Activated naive CD4-positive, alpha-beta T cell treated with anti-CD3 and anti-CD28 coated beads, Interleukin-2, amount 10 ng/mL, durations not matched to agents 7 days and 5 days (primary cell): ENCODE measurements at regions of chr5 and their contacts with region 1.

Region 1: DNA sequence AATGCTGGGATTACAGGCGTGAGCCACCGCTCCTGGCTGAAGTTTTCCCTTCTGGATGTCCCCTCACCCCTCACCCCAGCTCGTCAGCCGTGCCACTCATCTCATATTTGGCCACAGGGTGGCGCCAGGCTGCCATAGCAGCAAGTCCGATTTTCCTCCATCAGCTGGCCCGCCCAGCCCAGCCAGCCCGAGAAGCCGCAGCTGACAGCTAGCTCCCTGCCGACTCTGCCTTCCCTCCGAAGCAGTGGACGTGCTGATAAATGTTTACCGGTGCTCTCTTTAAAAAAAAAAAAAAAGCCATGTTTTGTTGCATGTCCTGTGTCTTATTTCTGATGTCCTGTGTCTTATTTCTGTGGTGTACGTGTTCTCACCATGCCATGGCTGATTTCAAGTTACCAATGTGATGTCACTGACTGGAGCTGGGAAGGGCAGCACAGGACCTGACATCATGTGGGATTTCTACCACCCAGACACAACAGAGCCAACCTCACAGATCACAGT is 58.3 kb downstream of the PFDN1 start:
- DNase-seq: peak; percentile 93
- H3K4me3 Mint-ChIP-seq: peak overlapping the region; percentile 32
- H3K27ac Mint-ChIP-seq: peak overlapping the region; percentile 9
- H3K4me1 Mint-ChIP-seq: peaks cover 52% of the 10 kb centered on the region
- H3K27me3 Mint-ChIP-seq: peaks cover 4% of the 10 kb centered on the region

Region 2: DNA sequence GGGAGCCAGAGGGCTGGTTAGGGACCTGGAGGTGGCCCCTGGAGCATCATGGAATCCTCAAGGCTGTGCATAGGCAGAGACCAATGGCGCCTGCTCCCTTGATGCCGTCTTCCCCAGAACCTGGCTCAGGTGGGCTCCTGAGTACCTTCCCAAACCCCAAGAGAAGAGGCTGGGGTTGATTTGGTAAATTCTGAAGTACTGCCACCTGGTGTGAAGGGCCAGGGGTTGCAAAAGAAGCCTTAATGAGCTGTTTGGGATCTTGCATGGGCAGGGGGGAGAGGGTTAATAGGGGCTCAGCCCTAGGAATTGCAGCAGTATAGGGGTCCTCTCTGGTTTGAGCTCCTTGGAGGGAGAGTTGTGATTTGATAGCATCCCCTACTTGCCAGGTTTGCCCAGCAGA is 17.5 kb before region 1 on chr5:
- CTCF ChIA-PET with region 1: interaction called, 12 read pairs
- DNase-seq: no peak
- H3K4me3 Mint-ChIP-seq: no peak overlapping the region
- H3K27ac Mint-ChIP-seq: no peak overlapping the region
- H3K4me1 Mint-ChIP-seq: peaks cover 1% of the 10 kb centered on the region
- H3K27me3 Mint-ChIP-seq: peaks cover 17% of the 10 kb centered on the region

Region 3: DNA sequence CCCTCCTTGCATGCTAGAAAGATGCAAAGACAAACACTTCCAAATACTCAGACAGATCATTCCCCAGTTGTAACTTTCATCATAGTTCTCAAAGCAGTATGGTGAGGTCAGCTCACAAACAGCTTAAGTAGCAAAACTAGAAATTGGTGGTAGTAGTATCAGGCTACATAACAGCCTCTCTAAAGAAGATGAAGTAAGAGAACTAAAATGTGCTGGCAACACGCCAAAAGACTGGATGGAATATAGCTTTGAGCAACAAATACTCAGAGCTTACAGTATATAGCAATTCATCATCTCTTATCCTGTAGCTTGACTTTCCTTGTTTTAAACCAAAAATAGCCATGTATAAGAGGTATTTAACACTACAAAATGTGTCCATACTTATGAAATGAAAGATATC is 50.8 kb after region 1 on chr5:
- CTCF ChIA-PET with region 1: interaction called, 16 read pairs
- DNase-seq: no peak
- H3K4me3 Mint-ChIP-seq: no peak overlapping the region
- H3K27ac Mint-ChIP-seq: no peak overlapping the region
- H3K4me1 Mint-ChIP-seq: peaks cover 61% of the 10 kb centered on the region
- H3K27me3 Mint-ChIP-seq: no peaks in the 10 kb centered on the region

Region 4: DNA sequence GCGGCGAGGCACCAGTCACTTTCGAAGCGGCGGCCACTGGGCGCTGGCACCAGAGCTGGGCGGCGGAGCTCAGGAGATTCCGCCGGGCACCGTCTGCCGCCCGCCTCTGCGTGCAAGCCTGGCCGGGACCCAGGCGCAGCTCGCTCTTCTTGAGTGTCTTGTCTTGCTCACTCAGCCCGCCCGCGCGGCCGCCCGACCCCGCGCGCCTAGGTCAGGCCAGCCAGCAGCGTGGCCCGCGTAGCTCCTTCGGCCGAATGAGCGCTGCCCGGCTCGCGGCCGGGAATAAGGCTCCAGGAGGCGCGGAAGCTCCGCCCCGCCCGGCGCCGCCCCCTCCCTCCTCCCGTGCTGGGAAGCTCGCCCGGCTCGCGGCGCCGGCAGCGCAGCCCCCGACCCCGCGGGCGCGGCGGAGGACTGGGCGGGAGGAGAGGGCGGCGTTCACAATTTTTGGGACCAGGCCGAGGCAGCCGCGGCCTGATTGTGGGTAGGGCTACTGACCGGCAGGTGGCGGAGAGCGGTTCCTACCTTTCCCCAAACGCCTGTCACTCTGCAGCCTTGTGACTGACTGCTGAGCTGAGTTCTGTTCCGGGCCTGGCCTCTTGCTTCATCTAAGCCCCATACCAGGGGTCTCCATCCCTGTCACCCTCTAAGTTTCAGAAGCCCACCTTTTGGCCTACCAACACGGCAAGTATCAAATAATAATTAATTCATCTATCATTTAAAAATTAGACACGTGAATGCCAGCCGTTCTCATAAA is 102.0 kb after region 1 on chr5 and contains the start of gene HBEGF:
- CTCF ChIA-PET with region 1: interaction called, 856 read pairs
- DNase-seq: peak; percentile 79
- H3K4me3 Mint-ChIP-seq: peak within 1 kb of the TSS; percentile 82
- H3K27ac Mint-ChIP-seq: peak within 1 kb of the TSS; percentile 79
- H3K4me1 Mint-ChIP-seq: peaks cover 78% of the 10 kb centered on the region
- H3K27me3 Mint-ChIP-seq: peaks cover 20% of the 10 kb centered on the region

Region 5: DNA sequence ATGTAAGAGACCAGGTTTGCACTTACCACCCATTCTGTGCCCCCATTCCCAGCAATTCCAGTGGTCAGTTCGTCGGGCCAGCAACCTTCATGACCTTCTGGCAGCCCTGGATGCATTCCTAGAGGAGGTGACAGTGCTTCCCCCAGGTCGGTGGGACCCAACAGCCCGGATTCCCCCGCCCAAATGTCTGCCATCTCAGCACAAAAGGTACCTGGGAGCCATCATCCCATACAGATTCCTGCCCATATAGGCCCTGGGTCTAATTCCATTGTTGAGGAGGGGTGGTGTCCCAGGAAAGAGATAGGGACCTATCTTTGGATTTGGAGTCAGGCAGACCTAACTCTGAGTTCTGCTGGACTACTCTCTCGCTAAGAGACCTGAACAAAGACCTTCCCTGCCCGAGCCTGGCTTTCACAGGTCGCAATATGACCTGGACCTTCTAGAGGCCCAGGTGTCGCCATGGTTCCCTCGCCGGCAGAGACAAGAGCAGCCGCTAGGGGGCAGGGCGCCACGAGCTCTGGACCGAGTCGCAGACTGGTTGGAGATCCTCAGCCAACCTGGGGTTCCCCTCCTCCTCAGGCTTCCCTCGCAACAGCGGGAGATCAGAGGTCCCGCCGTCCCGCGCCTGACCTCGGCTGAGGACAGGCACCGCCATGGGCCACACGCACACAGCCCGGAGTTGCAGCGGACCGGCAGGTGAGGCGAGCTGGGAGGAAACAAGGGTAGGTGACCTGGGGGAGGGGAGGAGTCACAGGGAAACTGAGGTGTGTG is 118.5 kb after region 1 on chr5:
- CTCF ChIA-PET with region 1: interaction called, 129 read pairs
- DNase-seq: peak; percentile 88
- H3K4me3 Mint-ChIP-seq: peak overlapping the region; percentile 67
- H3K27ac Mint-ChIP-seq: no peak overlapping the region
- H3K4me1 Mint-ChIP-seq: peaks cover 5% of the 10 kb centered on the region
- H3K27me3 Mint-ChIP-seq: peaks cover 20% of the 10 kb centered on the region